Activated CD4-positive, alpha-beta T cell treated with anti-CD3 and anti-CD28 coated beads for 36 hours (primary cell): ENCODE measurements at regions of chrX and their contacts with region 1.

Region 1: GRCh38 chrX:115642895-115643530 is 82.0 kb downstream of the PLS3 start:
- DNase-seq: peak; percentile 38
- ATAC-seq: no peak
- H3K4me3 Mint-ChIP-seq: no peak overlapping the region
- H3K27ac Mint-ChIP-seq: no peak overlapping the region
- H3K4me1 Mint-ChIP-seq: no peaks in the 10 kb centered on the region
- H3K27me3 Mint-ChIP-seq: peaks cover 2% of the 10 kb centered on the region

Region 2: GRCh38 chrX:114611018-114611619 is 1031.9 kb before region 1 on chrX:
- CTCF ChIA-PET with region 1: no interaction called
- POLR2A ChIA-PET with region 1: no interaction called
- intact Hi-C with region 1: loop called in 1 of 2 experiments (anchors 5 kb)
- DNase-seq: peak; percentile 32
- ATAC-seq: no peak
- H3K4me3 Mint-ChIP-seq: no peak overlapping the region
- H3K27ac Mint-ChIP-seq: no peak overlapping the region
- H3K4me1 Mint-ChIP-seq: no peaks in the 10 kb centered on the region
- H3K27me3 Mint-ChIP-seq: no peaks in the 10 kb centered on the region

Region 3: GRCh38 chrX:115226929-115227328 is 416.1 kb before region 1 on chrX:
- CTCF ChIA-PET with region 1: no interaction called
- POLR2A ChIA-PET with region 1: no interaction called
- intact Hi-C with region 1: loop called in 1 of 2 experiments (anchors 10 kb)
- DNase-seq: no peak
- ATAC-seq: no peak
- H3K4me3 Mint-ChIP-seq: no peak overlapping the region
- H3K27ac Mint-ChIP-seq: no peak overlapping the region
- H3K4me1 Mint-ChIP-seq: no peaks in the 10 kb centered on the region
- H3K27me3 Mint-ChIP-seq: peaks cover 4% of the 10 kb centered on the region

Region 4: DNA sequence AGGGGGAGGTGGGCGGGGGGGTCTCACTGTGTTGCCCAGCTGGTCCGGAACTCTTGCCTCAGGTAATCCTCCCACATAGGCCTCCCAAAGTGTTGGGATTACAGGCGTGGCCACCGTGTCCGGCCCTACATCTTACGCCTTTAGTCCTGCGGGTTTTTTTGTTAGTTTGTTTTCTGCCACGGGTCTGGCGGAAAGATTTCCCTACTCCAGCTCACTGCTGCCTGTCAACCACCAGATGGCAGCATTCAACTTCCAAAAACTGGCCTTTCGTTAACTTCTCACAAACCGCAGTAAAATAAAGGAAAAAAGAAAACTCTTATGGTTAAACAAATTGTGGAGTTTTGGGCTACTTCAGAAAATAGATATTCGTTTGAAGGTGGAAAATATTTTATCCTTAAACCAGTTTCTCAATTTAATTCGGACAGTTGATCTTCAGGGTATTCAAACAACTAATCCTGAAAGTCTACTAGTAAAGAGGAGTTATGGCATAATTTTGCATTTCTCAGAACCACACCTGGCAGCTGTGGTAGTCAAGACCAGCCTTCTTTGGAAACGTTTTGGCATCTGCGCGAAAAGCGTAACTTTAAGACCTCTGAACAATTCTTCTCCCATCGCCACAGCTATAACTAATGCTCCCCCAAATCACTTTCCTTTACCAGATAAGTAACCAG is 312.4 kb before region 1 on chrX:
- CTCF ChIA-PET with region 1: interaction called, 22 read pairs
- POLR2A ChIA-PET with region 1: no interaction called
- intact Hi-C with region 1: loop called (anchors 1 kb)
- DNase-seq: peak; percentile 29
- ATAC-seq: no peak
- H3K4me3 Mint-ChIP-seq: no peak overlapping the region
- H3K27ac Mint-ChIP-seq: no peak overlapping the region
- H3K4me1 Mint-ChIP-seq: no peaks in the 10 kb centered on the region
- H3K27me3 Mint-ChIP-seq: no peaks in the 10 kb centered on the region

Region 5: DNA sequence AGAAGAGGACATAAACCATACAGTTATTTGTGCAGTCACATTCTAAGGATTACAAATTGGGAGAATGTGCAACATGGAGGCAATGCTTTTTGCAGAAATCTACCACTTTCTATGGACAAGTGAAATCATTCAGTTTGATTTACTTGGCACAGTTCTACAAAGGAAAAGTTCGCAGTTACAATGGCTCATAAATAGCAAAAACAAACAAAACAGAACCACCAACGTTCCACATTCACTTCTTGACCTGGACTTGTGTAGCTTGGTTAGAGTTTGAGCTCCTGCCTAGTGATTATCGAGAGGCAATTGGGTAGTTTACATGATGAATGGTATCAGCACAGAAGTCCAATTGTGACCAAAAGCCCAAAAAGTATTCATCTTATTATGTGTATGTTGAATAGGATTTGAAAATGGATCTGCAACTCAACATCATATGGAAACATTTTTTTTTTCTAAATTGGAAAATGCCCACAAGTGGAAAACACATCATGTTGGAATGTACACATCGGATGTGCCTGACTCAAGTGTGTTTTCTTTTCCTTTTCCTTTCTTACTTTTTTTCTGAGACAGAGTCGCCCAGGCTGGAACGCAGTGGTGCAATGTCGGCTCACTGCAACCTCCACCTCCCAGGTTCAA is 229.7 kb before region 1 on chrX:
- CTCF ChIA-PET with region 1: no interaction called
- POLR2A ChIA-PET with region 1: no interaction called
- intact Hi-C with region 1: no loop called
- DNase-seq: no peak
- ATAC-seq: no peak
- H3K4me3 Mint-ChIP-seq: no peak overlapping the region
- H3K27ac Mint-ChIP-seq: no peak overlapping the region
- H3K4me1 Mint-ChIP-seq: no peaks in the 10 kb centered on the region
- H3K27me3 Mint-ChIP-seq: peaks cover under 1% of the 10 kb centered on the region